PC-9 (cell line): ENCODE measurements at regions of chr2 and their contacts with region 1.

Region 1: GRCh38 chr2:217650716-217651360 is 352.0 kb downstream of the TNS1 start:
- DNase-seq: peak in 1 of 2 experiments; percentile 12
- H3K4me3 ChIP-seq: no peak overlapping the region
- H3K27ac ChIP-seq: no peak overlapping the region
- H3K4me1 ChIP-seq: peaks cover 15% of the 10 kb centered on the region
- H3K27me3 ChIP-seq: no peaks in the 10 kb centered on the region
- CTCF ChIP-seq: peak; percentile 66

Region 2: GRCh38 chr2:217551252-217551899 is 99.5 kb before region 1 on chr2:
- CTCF ChIA-PET with region 1: no interaction called
- POLR2A ChIA-PET with region 1: no interaction called
- intact Hi-C with region 1: loop called (anchors 5 kb)
- DNase-seq: peak; percentile 51 to 56
- H3K4me3 ChIP-seq: no peak overlapping the region
- H3K27ac ChIP-seq: no peak overlapping the region
- H3K4me1 ChIP-seq: no peaks in the 10 kb centered on the region
- H3K27me3 ChIP-seq: no peaks in the 10 kb centered on the region
- CTCF ChIP-seq: no peak

Region 3: DNA sequence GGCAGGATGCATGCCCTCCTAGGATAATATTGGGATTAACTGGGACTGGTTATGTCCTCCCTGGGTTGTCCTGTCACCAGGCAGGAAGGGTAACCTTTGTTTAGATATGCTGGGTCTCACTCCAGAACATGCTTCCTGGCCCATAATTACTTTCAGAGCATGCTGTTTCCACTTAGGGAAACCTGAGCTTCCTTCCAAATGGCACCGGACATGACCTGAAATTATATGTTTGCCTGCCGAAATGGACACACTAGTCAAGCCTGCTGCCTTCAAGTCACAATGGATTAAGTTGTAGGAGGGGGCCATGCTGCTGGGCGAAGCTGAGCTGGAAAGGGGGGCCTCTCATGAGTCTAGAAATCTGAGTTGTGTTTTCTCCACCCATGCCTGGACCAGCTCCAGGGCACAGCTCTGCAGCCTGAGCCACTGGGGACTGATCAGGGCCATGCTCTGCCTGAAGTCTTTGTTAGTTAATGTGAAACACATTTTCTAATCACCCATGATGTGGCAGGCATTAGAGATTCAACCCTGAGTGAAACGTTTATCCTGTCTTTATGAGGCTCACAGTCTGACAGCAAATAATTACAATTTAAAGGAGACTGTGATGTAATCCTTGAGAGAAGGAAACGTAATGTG is 78.7 kb after region 1 on chr2:
- CTCF ChIA-PET with region 1: no interaction called
- POLR2A ChIA-PET with region 1: no interaction called
- intact Hi-C with region 1: no loop called
- DNase-seq: no peak
- H3K4me3 ChIP-seq: no peak overlapping the region
- H3K27ac ChIP-seq: no peak overlapping the region
- H3K4me1 ChIP-seq: no peaks in the 10 kb centered on the region
- H3K27me3 ChIP-seq: peaks cover 6% of the 10 kb centered on the region; the same call in 1 of the 2 replicates
- CTCF ChIP-seq: no peak